Ascending aorta (tissue), 2 donors: ENCODE measurements at regions of chr1 and their contacts with region 1.

Region 1: DNA sequence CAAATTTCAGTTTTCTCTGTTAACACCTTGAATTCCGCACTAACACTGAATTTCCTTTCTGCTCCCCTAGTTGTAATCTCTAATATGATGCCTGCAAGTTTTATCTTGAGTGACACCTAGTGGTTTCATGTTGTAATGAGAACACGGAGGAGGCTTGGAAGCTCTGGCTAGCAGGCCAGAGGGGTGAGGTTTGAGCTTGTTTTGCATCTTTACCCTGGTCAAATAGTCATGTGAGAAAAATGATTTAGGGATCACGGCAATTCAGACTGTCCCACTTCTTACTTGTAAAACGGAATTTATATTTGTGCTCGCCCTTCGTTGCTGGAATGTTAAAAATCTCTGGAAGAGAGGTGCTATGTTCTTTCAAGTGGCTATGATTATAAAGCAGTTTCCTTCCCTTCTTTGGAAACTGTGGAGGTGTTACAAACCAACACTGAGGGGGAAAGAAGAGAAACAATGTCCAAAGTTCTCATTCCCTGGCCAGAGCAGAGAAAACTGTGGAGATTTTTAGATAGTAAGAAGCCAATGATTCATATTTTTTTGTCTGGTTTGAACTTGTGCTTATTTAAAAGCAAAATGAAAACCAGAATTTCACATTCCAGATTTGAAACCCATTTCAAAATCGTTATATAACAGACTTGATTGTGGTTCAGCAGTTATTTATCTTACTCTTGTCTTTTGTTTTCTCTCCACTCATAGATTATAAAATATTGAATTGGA is 5.3 kb upstream of the MROH9 start:
- DNase-seq: no peak
- H3K4me3 ChIP-seq: peak overlapping the region in 1 of 2 donors; percentile 48
- H3K27ac ChIP-seq: peak overlapping the region; percentile 74 to 81
- H3K4me1 ChIP-seq: no peaks in the 10 kb centered on the region
- H3K27me3 ChIP-seq: no peaks in the 10 kb centered on the region
- CTCF ChIP-seq: peak; percentile 51 to 83 (median 69)

Region 2: GRCh38 chr1:169928438-169929209 is 1001.4 kb before region 1 on chr1:
- intact Hi-C with region 1: loop called (anchors 2 kb)
- DNase-seq: no peak
- H3K4me3 ChIP-seq: no peak overlapping the region
- H3K27ac ChIP-seq: no peak overlapping the region
- H3K4me1 ChIP-seq: peaks cover 0 to 5% of the 10 kb centered on the region in 2 donors
- H3K27me3 ChIP-seq: no peaks in the 10 kb centered on the region
- CTCF ChIP-seq: peak; percentile 48 to 69 (median 65)

Region 3: GRCh38 chr1:170685166-170685565 is 244.8 kb before region 1 on chr1:
- intact Hi-C with region 1: loop called (anchors 10 kb)
- DNase-seq: no peak
- H3K4me3 ChIP-seq: no peak overlapping the region
- H3K27ac ChIP-seq: no peak overlapping the region
- H3K4me1 ChIP-seq: peaks cover 0 to 14% of the 10 kb centered on the region in 2 donors
- H3K27me3 ChIP-seq: no peaks in the 10 kb centered on the region
- CTCF ChIP-seq: no peak